Spleen (tissue), 13 donors: ENCODE measurements at regions of chr20 and their contacts with region 1.

Region 1: GRCh38 chr20:63309261-63310071 is 16.5 kb downstream of the COL20A1 start:
- DNase-seq: no peak
- H3K4me3 ChIP-seq: no peak overlapping the region
- H3K27ac ChIP-seq: no peak overlapping the region
- H3K4me1 ChIP-seq: peaks cover 0 to 24% (median 12%) of the 10 kb centered on the region in 6 donors
- H3K27me3 ChIP-seq: peaks cover 0 to 89% (median 24%) of the 10 kb centered on the region in 7 donors
- CTCF ChIP-seq: peak; percentile 39 to 86 (median 76)
- POLR2A ChIP-seq: no peak

Region 2: GRCh38 chr20:63246490-63247288 is 62.8 kb before region 1 on chr20:
- intact Hi-C with region 1: no loop called
- DNase-seq: no peak
- H3K4me3 ChIP-seq: no peak overlapping the region
- H3K27ac ChIP-seq: no peak overlapping the region
- H3K4me1 ChIP-seq: peaks cover 0 to 13% (median 0%) of the 10 kb centered on the region in 6 donors
- H3K27me3 ChIP-seq: peaks cover 0 to 83% (median 38%) of the 10 kb centered on the region in 7 donors
- CTCF ChIP-seq: no peak
- POLR2A ChIP-seq: no peak

Region 3: GRCh38 chr20:63381807-63382322 is 72.4 kb after region 1 on chr20:
- intact Hi-C with region 1: loop called (anchors 5 kb)
- DNase-seq: no peak
- H3K4me3 ChIP-seq: no peak overlapping the region
- H3K27ac ChIP-seq: no peak overlapping the region
- H3K4me1 ChIP-seq: peaks cover 0 to 13% (median 0%) of the 10 kb centered on the region in 6 donors
- H3K27me3 ChIP-seq: peaks cover 0 to 79% (median 18%) of the 10 kb centered on the region in 7 donors
- CTCF ChIP-seq: peak; percentile 54 to 93 (median 84)
- POLR2A ChIP-seq: no peak

Region 4: GRCh38 chr20:64044484-64045247 is 735.2 kb after region 1 on chr20:
- intact Hi-C with region 1: no loop called
- DNase-seq: peak; percentile 74
- H3K4me3 ChIP-seq: peak overlapping the region in 2 of 8 donors; percentile 6 to 73
- H3K27ac ChIP-seq: peak overlapping the region in 6 of 8 donors; percentile 26 to 87 (median 72)
- H3K4me1 ChIP-seq: peaks cover 13 to 91% (median 50%) of the 10 kb centered on the region in 6 donors
- H3K27me3 ChIP-seq: peaks cover 0 to 73% (median 24%) of the 10 kb centered on the region in 7 donors
- CTCF ChIP-seq: no peak
- POLR2A ChIP-seq: no peak